ENCODE measurements at regions of chr5 and their contacts with region 1.

Region 1: DNA sequence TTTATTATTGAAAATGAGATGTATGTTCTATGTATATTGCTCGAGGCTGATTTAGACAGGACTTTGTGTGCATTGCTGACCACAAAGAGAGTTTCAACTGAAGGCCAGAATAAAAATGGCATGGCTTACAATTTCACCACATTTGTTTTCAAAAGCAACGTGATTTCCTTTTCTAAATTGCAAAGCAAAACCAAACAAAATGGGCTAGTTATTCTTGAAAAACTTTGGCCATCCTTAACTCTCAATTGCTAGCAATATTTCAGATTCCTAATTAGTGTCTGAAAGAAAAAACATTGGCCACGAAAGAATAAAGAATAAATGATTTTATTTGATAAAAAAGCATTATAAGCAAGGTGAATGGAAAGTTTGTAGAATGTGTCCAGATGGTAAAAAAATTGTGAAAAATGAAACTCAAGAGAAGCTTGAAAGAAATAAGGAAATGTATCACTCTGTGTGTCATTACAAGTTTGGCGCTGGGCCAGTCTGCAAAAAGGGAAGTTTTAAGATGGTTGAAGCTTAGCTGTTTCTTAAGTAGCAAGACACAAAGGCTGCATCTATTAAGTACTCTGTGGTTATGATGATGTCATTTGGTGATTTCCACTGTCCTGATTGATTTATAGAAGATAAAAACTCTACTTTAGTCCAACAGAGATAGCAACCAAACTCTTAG is 89.2 kb upstream of the PRLR start:
- DNase-seq: peak; percentile 94
- H3K4me3 Mint-ChIP-seq: no peak overlapping the region
- H3K27ac Mint-ChIP-seq: peak overlapping the region; percentile 24
- H3K4me1 Mint-ChIP-seq: peaks cover 14% of the 10 kb centered on the region
- H3K27me3 Mint-ChIP-seq: peaks cover 24% of the 10 kb centered on the region

Region 2: DNA sequence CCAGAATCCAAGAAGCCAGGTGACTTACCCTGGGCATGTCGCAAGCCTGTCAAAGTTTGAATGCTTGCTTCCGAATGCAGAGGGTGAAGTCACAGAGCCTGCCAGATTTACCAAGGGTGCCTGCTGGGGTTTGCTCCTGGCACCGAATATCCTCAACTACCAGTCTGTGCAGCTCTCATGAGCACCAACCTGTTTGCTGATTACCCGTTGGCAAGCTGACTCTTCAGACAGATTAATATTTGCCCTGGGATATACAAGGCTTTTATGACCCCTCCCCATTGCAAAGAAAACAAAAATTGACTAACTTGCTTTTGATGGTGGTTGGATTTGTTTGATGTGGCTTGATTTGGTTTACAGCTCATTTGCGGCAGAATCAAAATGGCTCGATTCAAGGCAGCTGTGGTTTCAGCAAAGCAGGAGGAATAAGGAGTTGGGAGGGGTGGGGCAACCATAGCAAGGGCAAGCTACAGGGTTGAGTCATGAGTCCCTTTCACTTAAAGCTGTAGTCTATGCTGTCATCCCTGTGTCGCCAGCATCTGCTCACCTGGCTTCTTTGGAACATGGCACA is 189.5 kb before region 1 on chr5:
- CTCF ChIA-PET with region 1: no interaction called
- intact Hi-C with region 1: loop called (anchors 1 kb)
- DNase-seq: peak; percentile 76
- H3K4me3 Mint-ChIP-seq: no peak overlapping the region
- H3K27ac Mint-ChIP-seq: no peak overlapping the region
- H3K4me1 Mint-ChIP-seq: peaks cover 18% of the 10 kb centered on the region
- H3K27me3 Mint-ChIP-seq: peaks cover 55% of the 10 kb centered on the region

Region 3: DNA sequence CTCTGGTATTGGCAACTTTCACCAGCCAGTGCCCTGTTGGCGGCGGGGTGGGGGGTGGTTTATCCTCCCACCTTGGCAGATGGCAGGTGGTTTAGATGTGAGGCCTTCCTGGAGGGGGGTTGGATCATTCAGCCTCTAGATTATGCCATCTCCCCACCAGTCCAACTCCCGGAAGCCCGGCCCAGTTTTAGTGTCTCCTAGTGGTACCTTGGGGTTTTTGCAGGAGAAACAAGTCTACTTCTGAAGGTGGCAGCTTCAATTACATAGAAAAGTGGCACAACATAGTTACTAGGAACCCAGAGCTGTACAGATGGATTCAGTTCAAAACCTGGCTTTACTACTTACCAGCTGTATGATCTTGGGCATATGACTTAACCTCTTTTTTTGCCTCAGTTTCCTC is 100.5 kb before region 1 on chr5:
- CTCF ChIA-PET with region 1: no interaction called
- intact Hi-C with region 1: no loop called
- DNase-seq: no peak
- H3K4me3 Mint-ChIP-seq: no peak overlapping the region
- H3K27ac Mint-ChIP-seq: no peak overlapping the region
- H3K4me1 Mint-ChIP-seq: no peaks in the 10 kb centered on the region
- H3K27me3 Mint-ChIP-seq: peaks cover 13% of the 10 kb centered on the region

Region 4: GRCh38 chr5:35230038-35230631 is 89.3 kb before region 1 on chr5 and contains the start of gene PRLR:
- CTCF ChIA-PET with region 1: no interaction called
- intact Hi-C with region 1: loop called (anchors 5 kb)
- DNase-seq: peak; percentile 6
- H3K4me3 Mint-ChIP-seq: peak within 1 kb of the TSS; percentile 58
- H3K27ac Mint-ChIP-seq: no peak within 1 kb of the TSS
- H3K4me1 Mint-ChIP-seq: peaks cover 6% of the 10 kb centered on the region
- H3K27me3 Mint-ChIP-seq: peaks cover 56% of the 10 kb centered on the region
- total RNA-seq, gene PRLR: not detected

Region 5: GRCh38 chr5:35617435-35618303 is 298.2 kb after region 1 on chr5 and contains the start of gene SPEF2:
- CTCF ChIA-PET with region 1: no interaction called
- intact Hi-C with region 1: loop called (anchors 5 kb)
- DNase-seq: peak; percentile 86
- H3K4me3 Mint-ChIP-seq: peak within 1 kb of the TSS; percentile 90
- H3K27ac Mint-ChIP-seq: peak within 1 kb of the TSS; percentile 88
- H3K4me1 Mint-ChIP-seq: peaks cover 16% of the 10 kb centered on the region
- H3K27me3 Mint-ChIP-seq: no peaks in the 10 kb centered on the region
- total RNA-seq, gene SPEF2: 6.5 to 6.6 TPM

Region 6: DNA sequence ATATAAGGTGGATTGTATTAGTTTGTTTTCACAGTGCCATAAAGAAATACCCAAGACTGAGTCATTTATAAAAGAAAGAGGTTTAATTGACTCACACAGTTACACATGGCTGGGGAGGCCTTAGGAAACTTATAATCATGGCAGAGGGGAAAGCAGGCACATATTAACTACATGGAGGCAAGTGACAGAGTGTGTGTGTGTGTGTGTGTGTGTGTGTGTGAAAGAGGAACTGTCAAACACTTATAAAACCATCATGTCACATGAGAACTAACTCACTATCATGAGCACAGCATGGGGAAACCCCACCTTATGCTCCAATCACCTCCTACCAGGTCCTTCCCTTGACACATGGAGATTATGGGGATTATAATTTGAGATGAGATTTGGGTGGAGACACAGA is 416.8 kb after region 1 on chr5:
- CTCF ChIA-PET with region 1: no interaction called
- intact Hi-C with region 1: loop called (anchors 1 kb)
- DNase-seq: peak; percentile 83
- H3K4me3 Mint-ChIP-seq: no peak overlapping the region
- H3K27ac Mint-ChIP-seq: peak overlapping the region; percentile 73
- H3K4me1 Mint-ChIP-seq: peaks cover 58% of the 10 kb centered on the region
- H3K27me3 Mint-ChIP-seq: no peaks in the 10 kb centered on the region

Region 7: GRCh38 chr5:36060420-36060887 is 741.0 kb after region 1 on chr5:
- CTCF ChIA-PET with region 1: no interaction called
- intact Hi-C with region 1: no loop called
- DNase-seq: no peak
- H3K4me3 Mint-ChIP-seq: no peak overlapping the region
- H3K27ac Mint-ChIP-seq: no peak overlapping the region
- H3K4me1 Mint-ChIP-seq: no peaks in the 10 kb centered on the region
- H3K27me3 Mint-ChIP-seq: peaks cover 18% of the 10 kb centered on the region